Mammary epithelial cell (primary cell): ENCODE measurements at regions of chrX and their contacts with region 1.

Region 1: GRCh38 chrX:80317646-80318045 is 102.6 kb upstream of the TENT5D start:
- DNase-seq: no peak
- H3K4me3 ChIP-seq: no peak overlapping the region
- H3K27ac ChIP-seq: no peak overlapping the region
- H3K4me1 ChIP-seq: no peaks in the 10 kb centered on the region
- H3K27me3 ChIP-seq: no peaks in the 10 kb centered on the region
- CTCF ChIP-seq: no peak

Region 2: GRCh38 chrX:80290834-80291233 is 26.8 kb before region 1 on chrX:
- CTCF ChIA-PET with region 1: no interaction called
- dilution Hi-C with region 1: no loop called
- in situ Hi-C with region 1: no loop called
- intact Hi-C with region 1: no loop called
- DNase-seq: no peak
- H3K4me3 ChIP-seq: no peak overlapping the region
- H3K27ac ChIP-seq: no peak overlapping the region
- H3K4me1 ChIP-seq: no peaks in the 10 kb centered on the region
- H3K27me3 ChIP-seq: no peaks in the 10 kb centered on the region
- CTCF ChIP-seq: no peak

Region 3: GRCh38 chrX:80354966-80355465 is 37.4 kb after region 1 on chrX:
- CTCF ChIA-PET with region 1: no interaction called
- dilution Hi-C with region 1: no loop called
- in situ Hi-C with region 1: no loop called
- intact Hi-C with region 1: no loop called
- DNase-seq: no peak
- H3K4me3 ChIP-seq: no peak overlapping the region
- H3K27ac ChIP-seq: no peak overlapping the region
- H3K4me1 ChIP-seq: no peaks in the 10 kb centered on the region
- H3K27me3 ChIP-seq: no peaks in the 10 kb centered on the region
- CTCF ChIP-seq: no peak

Region 4: DNA sequence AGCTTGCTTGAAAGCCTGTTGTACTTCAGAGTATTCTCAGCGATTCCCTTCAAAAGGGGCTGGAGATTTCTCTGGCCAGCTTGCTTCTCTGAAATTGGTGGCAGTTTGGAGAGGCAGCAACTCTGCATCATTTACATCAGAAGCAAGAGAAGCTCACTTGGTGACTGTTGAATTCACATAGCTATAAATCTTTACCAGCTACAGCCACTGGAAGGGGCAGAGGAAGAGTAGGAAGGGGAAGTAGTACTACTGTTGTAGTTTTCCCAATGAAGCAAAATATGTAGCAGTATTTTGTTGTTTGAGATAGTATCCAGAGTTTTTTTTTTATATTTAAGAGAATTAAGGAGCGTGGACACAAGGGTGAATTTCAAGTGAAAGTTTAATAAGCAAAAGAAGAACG is 105.4 kb after region 1 on chrX:
- CTCF ChIA-PET with region 1: no interaction called
- dilution Hi-C with region 1: no loop called
- in situ Hi-C with region 1: no loop called
- intact Hi-C with region 1: no loop called
- DNase-seq: no peak
- H3K4me3 ChIP-seq: no peak overlapping the region
- H3K27ac ChIP-seq: no peak overlapping the region
- H3K4me1 ChIP-seq: no peaks in the 10 kb centered on the region
- H3K27me3 ChIP-seq: no peaks in the 10 kb centered on the region
- CTCF ChIP-seq: no peak

Region 5: GRCh38 chrX:80817002-80817401 is 499.4 kb after region 1 on chrX:
- CTCF ChIA-PET with region 1: interaction called, 10 read pairs
- dilution Hi-C with region 1: no loop called
- in situ Hi-C with region 1: no loop called
- intact Hi-C with region 1: no loop called
- DNase-seq: no peak
- H3K4me3 ChIP-seq: no peak overlapping the region
- H3K27ac ChIP-seq: no peak overlapping the region
- H3K4me1 ChIP-seq: no peaks in the 10 kb centered on the region
- H3K27me3 ChIP-seq: no peaks in the 10 kb centered on the region
- CTCF ChIP-seq: no peak